ENCODE measurements at regions of chr15 and their contacts with region 1.

Region 1: DNA sequence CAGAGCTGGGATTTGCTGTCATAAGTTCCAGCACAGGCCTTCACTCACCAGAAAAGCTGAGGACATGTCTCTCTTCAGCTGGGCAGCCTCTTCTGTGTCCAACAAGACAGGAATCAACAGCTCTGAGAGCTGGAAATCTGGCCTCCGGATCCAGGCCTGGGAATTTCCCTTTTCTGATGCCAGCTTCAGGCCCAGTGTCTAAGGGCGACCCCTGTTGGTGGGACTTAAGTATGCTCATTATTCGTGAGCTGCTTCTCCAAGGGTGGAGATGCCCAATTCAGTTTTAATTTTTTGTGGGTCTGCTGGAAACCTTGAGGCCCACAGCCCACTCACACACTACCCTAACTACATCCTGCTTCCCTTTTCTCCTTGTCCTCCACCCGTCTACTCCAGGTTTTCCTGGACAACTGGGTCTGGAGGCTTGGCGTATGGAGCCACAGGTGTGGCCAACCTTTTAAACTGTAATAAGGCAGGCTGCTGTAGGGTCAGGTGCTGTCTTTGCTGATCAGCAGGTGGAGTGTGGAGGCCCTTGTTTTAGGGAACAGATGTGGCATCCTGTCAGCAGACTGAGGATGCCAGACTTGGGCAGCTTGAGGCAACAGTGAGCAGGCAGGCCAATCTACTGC is 2.6 kb upstream of the CEMIP start:
- DNase-seq: peak; percentile 82
- ATAC-seq: no peak
- H3K4me3 Mint-ChIP-seq: no peak overlapping the region
- H3K27ac Mint-ChIP-seq: no peak overlapping the region
- H3K4me1 Mint-ChIP-seq: peaks cover 6% of the 10 kb centered on the region
- H3K27me3 Mint-ChIP-seq: peaks cover 44% of the 10 kb centered on the region

Region 2: DNA sequence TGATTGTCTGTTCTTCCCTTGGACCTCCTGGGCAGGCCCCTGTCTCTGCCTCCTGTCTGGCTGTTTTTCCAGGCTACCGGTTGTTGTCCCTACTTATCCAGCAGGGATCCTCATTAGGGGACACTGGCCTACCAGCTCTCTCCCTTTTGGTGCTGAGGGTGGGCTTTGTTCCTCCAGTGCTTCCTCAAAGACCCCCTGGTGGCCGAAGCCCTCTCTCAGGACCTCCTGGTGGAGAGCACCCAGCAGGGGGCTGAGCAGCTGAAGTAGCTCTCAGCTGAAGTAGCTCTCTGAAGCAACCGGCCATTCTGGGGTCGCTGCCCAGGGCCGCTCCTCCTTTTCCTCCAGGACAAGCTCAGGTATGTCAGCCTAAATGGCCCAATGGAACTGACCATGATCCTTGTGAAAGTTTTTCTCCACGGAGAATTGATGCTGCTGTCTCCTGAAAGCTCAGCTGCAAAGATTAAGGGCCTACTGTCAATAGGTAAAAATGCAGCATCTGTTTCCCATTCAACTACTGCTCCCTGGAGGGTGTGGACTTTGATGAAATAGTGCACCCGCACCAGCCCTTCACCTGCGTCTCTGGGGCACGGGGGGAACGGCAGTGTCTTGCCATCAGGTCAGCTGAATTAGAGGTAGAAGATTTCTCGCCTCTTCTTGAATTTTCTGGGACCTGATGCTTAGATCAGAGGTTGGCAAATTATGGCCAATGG is 344.7 kb before region 1 on chr15:
- CTCF ChIA-PET with region 1: no interaction called
- POLR2A ChIA-PET with region 1: no interaction called
- intact Hi-C with region 1: no loop called
- DNase-seq: no peak
- ATAC-seq: no peak
- H3K4me3 Mint-ChIP-seq: no peak overlapping the region
- H3K27ac Mint-ChIP-seq: no peak overlapping the region
- H3K4me1 Mint-ChIP-seq: peaks cover 2% of the 10 kb centered on the region
- H3K27me3 Mint-ChIP-seq: peaks cover 7% of the 10 kb centered on the region

Region 3: DNA sequence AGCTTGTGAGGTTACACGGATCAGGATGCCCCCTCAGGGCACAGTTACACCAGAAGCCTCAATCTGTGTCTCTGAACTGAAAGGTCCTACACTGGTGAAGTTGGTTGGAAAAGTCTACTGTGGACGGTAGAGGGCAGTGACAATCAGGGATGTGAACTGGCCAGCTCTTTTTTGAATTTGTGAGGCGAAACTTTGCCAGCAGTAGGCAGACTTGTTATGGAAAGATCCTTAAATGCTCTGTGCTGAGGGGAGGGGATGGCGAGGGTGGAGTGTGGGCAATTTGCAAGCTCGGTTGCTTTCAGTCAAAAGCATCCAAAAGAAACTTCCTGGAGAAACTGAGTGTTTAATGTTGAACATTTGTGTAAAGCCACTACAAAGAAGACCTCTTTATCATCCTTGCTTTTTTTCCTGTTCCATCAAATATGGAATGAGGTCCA is 208.8 kb before region 1 on chr15:
- CTCF ChIA-PET with region 1: interaction called, 27 read pairs
- POLR2A ChIA-PET with region 1: no interaction called
- intact Hi-C with region 1: loop called (anchors 1 to 2 kb)
- DNase-seq: peak; percentile 39
- ATAC-seq: peak; percentile 57
- H3K4me3 Mint-ChIP-seq: no peak overlapping the region
- H3K27ac Mint-ChIP-seq: no peak overlapping the region
- H3K4me1 Mint-ChIP-seq: peaks cover 9% of the 10 kb centered on the region
- H3K27me3 Mint-ChIP-seq: peaks cover 7% of the 10 kb centered on the region

Region 4: GRCh38 chr15:80695104-80695910 is 81.2 kb before region 1 on chr15 and contains the start of gene ABHD17C:
- CTCF ChIA-PET with region 1: interaction called, 7 read pairs
- POLR2A ChIA-PET with region 1: no interaction called
- intact Hi-C with region 1: loop called in 1 of 2 experiments (anchors 2 kb)
- DNase-seq: peak; percentile 67
- ATAC-seq: peak; percentile 68
- H3K4me3 Mint-ChIP-seq: peak within 1 kb of the TSS; percentile 85
- H3K27ac Mint-ChIP-seq: peak within 1 kb of the TSS; percentile 87
- H3K4me1 Mint-ChIP-seq: peaks cover 18% of the 10 kb centered on the region
- H3K27me3 Mint-ChIP-seq: peaks cover 9% of the 10 kb centered on the region
- total RNA-seq, gene ABHD17C: 5.8 to 6.7 TPM

Region 5: GRCh38 chr15:80804965-80805495 is 28.5 kb after region 1 on chr15:
- CTCF ChIA-PET with region 1: interaction called, 15 read pairs
- POLR2A ChIA-PET with region 1: no interaction called
- intact Hi-C with region 1: no loop called
- DNase-seq: peak; percentile 42
- ATAC-seq: peak; percentile 49
- H3K4me3 Mint-ChIP-seq: no peak overlapping the region
- H3K27ac Mint-ChIP-seq: peak overlapping the region; percentile 79
- H3K4me1 Mint-ChIP-seq: peaks cover 29% of the 10 kb centered on the region
- H3K27me3 Mint-ChIP-seq: peaks cover 2% of the 10 kb centered on the region

Region 6: DNA sequence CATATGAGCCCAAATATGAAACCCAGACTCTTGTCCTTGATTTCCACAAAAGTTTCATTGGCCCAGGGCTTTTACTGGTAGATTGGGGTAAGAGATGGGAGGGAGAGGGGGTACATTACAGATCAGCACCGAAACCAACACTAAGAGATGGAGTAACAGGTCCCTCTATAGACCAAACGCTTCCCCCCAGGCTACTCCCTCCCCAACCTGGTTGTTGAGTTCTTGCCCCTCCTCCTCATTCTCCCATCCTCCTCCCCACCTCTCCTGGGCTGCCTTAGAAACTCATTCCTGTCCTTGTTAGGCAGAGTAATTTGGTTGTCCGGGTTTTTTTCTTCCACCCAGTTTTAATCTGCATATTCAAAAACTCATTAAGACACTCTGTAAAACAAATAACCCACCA is 138.9 kb after region 1 on chr15:
- CTCF ChIA-PET with region 1: no interaction called
- POLR2A ChIA-PET with region 1: no interaction called
- intact Hi-C with region 1: no loop called
- DNase-seq: no peak
- ATAC-seq: no peak
- H3K4me3 Mint-ChIP-seq: no peak overlapping the region
- H3K27ac Mint-ChIP-seq: no peak overlapping the region
- H3K4me1 Mint-ChIP-seq: peaks cover 9% of the 10 kb centered on the region
- H3K27me3 Mint-ChIP-seq: no peaks in the 10 kb centered on the region

Region 7: DNA sequence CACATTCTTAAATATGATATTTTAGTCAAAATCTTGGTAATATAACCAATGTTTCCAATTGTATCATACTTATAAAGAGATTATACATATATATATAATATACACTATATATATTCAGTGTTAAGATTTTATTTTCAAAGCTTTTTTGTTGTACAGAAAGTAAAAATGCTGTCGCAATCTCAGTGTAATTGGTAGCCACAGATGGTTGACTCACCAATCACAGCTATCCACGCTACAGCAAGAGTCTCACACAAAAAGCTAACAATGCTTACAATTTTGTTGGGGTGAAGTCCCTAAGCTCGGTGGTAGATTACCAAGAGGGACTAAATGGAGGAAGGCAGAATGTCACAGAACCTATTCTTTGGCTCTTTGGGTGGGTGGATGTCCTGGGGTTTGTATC is 340.6 kb after region 1 on chr15:
- CTCF ChIA-PET with region 1: no interaction called
- POLR2A ChIA-PET with region 1: no interaction called
- intact Hi-C with region 1: no loop called
- DNase-seq: no peak
- ATAC-seq: no peak
- H3K4me3 Mint-ChIP-seq: no peak overlapping the region
- H3K27ac Mint-ChIP-seq: no peak overlapping the region
- H3K4me1 Mint-ChIP-seq: no peaks in the 10 kb centered on the region
- H3K27me3 Mint-ChIP-seq: peaks cover 32% of the 10 kb centered on the region

Region 8: GRCh38 chr15:81163961-81164800 is 387.6 kb after region 1 on chr15:
- CTCF ChIA-PET with region 1: no interaction called
- POLR2A ChIA-PET with region 1: no interaction called
- intact Hi-C with region 1: no loop called
- DNase-seq: no peak
- ATAC-seq: no peak
- H3K4me3 Mint-ChIP-seq: no peak overlapping the region
- H3K27ac Mint-ChIP-seq: no peak overlapping the region
- H3K4me1 Mint-ChIP-seq: peaks cover 19% of the 10 kb centered on the region
- H3K27me3 Mint-ChIP-seq: peaks cover 9% of the 10 kb centered on the region

Measured in activated CD4-positive, alpha-beta T cell treated with anti-CD3 and anti-CD28 coated beads for 36 hours (primary cell).